Activated T-helper 1 cell treated with anti-CD3 and anti-CD28 coated beads, Interleukin-12 subunit alpha, Interleukin-12 subunit beta, Interleukin-2, Interleukin-4 antibody, amounts not matched to agents 30 ng/mL and 10 ng/mL and 1 ng/mL, durations not matched to agents 14 hours and 24 hours and 36 hours (primary cell): ENCODE measurements at regions of chr20 and their contacts with region 1.

Region 1: DNA sequence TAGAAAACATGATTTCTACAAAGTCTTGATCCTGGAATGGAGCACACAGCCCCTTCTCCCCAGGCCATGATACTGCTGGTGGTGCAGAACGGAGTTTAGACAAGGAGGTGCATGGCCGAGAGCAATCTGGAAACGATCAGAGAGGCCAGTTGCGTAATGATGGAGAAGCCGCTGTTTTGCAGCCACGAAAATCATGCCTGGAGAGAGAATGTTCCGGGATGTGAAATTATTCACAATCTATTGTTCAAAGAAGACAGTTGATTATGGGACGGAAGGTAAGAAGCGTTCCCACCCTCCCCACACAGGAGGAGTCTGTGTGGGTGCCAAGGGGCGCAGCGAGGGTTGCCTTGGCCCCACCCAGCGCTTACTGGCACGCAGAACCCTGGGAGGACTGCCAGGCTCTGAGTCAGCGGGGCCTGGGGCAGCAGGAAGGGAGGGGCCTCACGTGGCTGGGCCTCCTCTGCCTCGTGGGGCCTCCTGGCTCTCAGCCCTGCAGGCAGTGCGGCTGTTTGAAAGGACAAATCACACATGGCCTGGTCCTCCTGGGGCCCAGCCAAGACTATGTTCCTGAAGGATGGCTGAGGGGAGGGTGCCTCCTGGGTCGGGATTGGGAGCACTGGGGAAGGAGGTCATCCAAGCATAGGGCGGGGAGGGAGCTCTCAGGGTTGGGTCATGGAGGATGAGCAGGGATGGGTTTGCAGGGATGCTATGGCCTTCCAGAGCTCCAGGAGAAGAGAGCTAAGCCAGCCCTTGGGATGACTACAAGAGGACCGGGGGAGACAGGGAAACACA is 8.7 kb upstream of the AP5S1 start:
- DNase-seq: peak; percentile 77
- H3K4me3 Mint-ChIP-seq: peak overlapping the region; percentile 75
- H3K27ac Mint-ChIP-seq: peak overlapping the region; percentile 92
- H3K4me1 Mint-ChIP-seq: peaks cover 65% of the 10 kb centered on the region
- H3K27me3 Mint-ChIP-seq: no peaks in the 10 kb centered on the region

Region 2: DNA sequence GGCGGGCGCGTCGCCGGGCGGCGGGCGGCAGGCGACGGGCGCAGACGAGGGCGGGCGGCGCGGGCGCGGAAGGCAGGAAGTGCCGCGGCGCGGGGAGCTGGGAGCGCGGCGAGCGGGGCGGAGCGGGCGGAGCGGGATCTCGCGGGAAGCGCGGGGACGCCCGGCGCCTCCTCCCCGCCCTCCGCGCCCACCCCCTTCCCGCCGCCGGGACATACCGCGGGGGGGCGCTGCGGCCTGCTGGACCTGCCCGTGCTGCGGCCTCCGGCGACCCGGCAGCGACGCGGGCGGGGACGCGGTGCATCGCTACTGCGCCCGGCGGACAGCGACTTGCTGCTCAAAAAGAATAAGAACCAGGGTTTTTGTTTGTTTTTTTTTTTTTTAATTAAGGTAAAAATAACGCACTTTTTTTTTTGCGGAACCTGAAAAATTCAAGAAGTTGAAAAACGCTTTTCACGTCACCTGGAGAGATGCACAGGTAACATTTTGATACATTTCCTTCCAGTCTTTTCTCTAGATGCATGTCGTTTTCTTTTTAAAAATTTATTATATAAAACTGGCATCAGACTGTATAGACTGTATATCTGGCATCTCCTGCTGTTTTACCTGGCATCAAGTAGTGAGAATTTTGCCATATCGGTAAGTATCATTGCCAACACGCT is 24.9 kb before region 1 on chr20 and contains the start of gene CENPB:
- intact Hi-C with region 1: loop called (anchors 2 kb)
- DNase-seq: peak; percentile 88
- H3K4me3 Mint-ChIP-seq: peak within 1 kb of the TSS; percentile 86
- H3K27ac Mint-ChIP-seq: peak within 1 kb of the TSS; percentile 70
- H3K4me1 Mint-ChIP-seq: peaks cover 39% of the 10 kb centered on the region
- H3K27me3 Mint-ChIP-seq: no peaks in the 10 kb centered on the region
- total RNA-seq, gene CENPB: 72.3 and 80.2 TPM in 2 replicates

Region 3: GRCh38 chr20:3795511-3796468 is 15.9 kb before region 1 on chr20 and contains the start of gene CDC25B:
- intact Hi-C with region 1: loop called (anchors 1 kb)
- DNase-seq: peak; percentile 81
- H3K4me3 Mint-ChIP-seq: peak within 1 kb of the TSS; percentile 93
- H3K27ac Mint-ChIP-seq: peak within 1 kb of the TSS; percentile 96
- H3K4me1 Mint-ChIP-seq: peaks cover 47% of the 10 kb centered on the region
- H3K27me3 Mint-ChIP-seq: no peaks in the 10 kb centered on the region
- total RNA-seq, gene CDC25B: 71.7 and 76.2 TPM in 2 replicates